HepG2 (cell line): ENCODE measurements at regions of chr20 and their contacts with region 1.

Region 1: DNA sequence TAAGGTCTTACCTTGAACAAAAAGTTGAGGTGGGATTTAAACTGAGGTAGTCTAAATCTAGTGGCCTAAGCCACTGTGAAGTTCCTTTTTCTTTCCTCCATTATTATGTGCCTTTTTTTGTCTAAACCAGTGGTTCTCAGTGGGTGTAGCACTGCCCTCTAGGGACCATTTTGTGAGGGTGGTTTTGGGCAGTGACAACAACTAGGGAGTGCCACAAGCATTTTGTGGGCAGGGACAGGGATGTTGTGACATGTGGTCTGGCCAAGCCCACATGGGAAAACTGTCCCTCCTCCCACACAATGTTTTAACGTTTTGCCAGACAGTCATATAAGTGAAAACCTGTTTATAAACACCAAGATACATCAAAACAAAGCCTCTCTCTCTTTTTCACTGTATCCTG is 899.4 kb upstream of the FLRT3 start:
- DNase-seq: peak; percentile 58
- ATAC-seq: peak; percentile 99
- H3K4me3 ChIP-seq: no peak overlapping the region
- H3K27ac ChIP-seq: no peak overlapping the region
- H3K4me1 ChIP-seq: no peaks in the 10 kb centered on the region
- H3K27me3 ChIP-seq: no peaks in the 10 kb centered on the region
- CTCF ChIP-seq: peak; percentile 89
- EP300 ChIP-seq: no peak
- POLR2A ChIP-seq: no peak
- RAD21 ChIP-seq: peak; percentile 75

Region 2: DNA sequence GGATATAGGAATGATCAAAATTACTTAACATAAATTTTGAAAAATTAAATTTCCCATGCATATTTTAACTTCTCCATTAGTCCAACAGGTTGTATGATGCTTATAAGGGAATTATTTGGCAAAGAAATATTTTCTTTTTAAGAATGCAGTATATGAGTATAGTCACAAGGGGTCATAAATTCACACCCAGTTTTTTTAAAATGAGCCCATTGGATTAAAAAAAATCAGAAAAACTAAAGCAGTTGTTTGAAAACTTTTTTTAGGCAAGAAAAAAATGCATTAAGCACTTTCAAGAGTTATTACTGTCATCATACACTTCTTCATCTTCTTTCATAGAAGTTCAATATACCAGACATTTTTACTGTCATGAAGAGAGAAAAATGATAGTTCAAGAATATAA is 495.2 kb before region 1 on chr20:
- CTCF ChIA-PET with region 1: no interaction called
- POLR2A ChIA-PET with region 1: no interaction called
- in situ Hi-C with region 1: no loop called
- intact Hi-C with region 1: loop called (anchors 2 kb)
- DNase-seq: no peak
- ATAC-seq: no peak
- H3K4me3 ChIP-seq: no peak overlapping the region
- H3K27ac ChIP-seq: no peak overlapping the region
- H3K4me1 ChIP-seq: no peaks in the 10 kb centered on the region
- H3K27me3 ChIP-seq: no peaks in the 10 kb centered on the region
- CTCF ChIP-seq: no peak
- EP300 ChIP-seq: no peak
- POLR2A ChIP-seq: no peak
- RAD21 ChIP-seq: no peak

Region 3: GRCh38 chr20:14838663-14839628 is 397.9 kb before region 1 on chr20:
- CTCF ChIA-PET with region 1: no interaction called
- POLR2A ChIA-PET with region 1: no interaction called
- in situ Hi-C with region 1: no loop called
- intact Hi-C with region 1: loop called (anchors 5 kb)
- DNase-seq: no peak
- ATAC-seq: no peak
- H3K4me3 ChIP-seq: no peak overlapping the region
- H3K27ac ChIP-seq: no peak overlapping the region
- H3K4me1 ChIP-seq: no peaks in the 10 kb centered on the region
- H3K27me3 ChIP-seq: no peaks in the 10 kb centered on the region
- CTCF ChIP-seq: no peak
- EP300 ChIP-seq: no peak
- POLR2A ChIP-seq: no peak
- RAD21 ChIP-seq: no peak